ENCODE measurements at regions of chr5 and their contacts with region 1.

Region 1: GRCh38 chr5:6623228-6623627 is 9.6 kb downstream of the NSUN2 start:
- DNase-seq: no peak
- ATAC-seq: no peak
- H3K4me3 ChIP-seq: no peak overlapping the region
- H3K27ac ChIP-seq: no peak overlapping the region
- H3K4me1 ChIP-seq: no peaks in the 10 kb centered on the region
- H3K27me3 ChIP-seq: no peaks in the 10 kb centered on the region
- CTCF ChIP-seq: no peak

Region 2: GRCh38 chr5:6246820-6247437 is 376.3 kb before region 1 on chr5:
- CTCF ChIA-PET with region 1: no interaction called
- POLR2A ChIA-PET with region 1: no interaction called
- intact Hi-C with region 1: no loop called
- DNase-seq: peak; percentile 60
- ATAC-seq: no peak
- H3K4me3 ChIP-seq: no peak overlapping the region
- H3K27ac ChIP-seq: no peak overlapping the region
- H3K4me1 ChIP-seq: peaks cover 13% of the 10 kb centered on the region
- H3K27me3 ChIP-seq: no peaks in the 10 kb centered on the region
- CTCF ChIP-seq: no peak

Region 3: DNA sequence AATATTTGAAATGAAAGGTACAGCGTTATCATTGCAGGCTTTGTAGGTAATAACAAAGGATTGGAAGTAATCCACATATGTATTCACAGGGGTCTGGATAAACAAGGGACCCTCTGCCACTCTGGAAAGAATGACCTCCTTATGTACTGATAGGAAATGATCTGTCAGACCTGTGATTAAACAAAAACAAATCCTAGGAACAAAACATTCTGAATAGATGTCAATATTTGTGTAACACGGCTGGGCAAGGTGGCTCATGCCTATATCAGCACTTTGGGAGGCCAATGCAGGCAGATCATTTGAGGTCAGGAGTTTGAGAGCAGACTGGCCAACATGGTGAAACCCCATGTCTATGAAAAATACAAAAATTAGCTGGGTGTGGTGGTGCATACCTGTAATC is 32.6 kb before region 1 on chr5:
- CTCF ChIA-PET with region 1: no interaction called
- POLR2A ChIA-PET with region 1: interaction called, 21 read pairs
- intact Hi-C with region 1: no loop called
- DNase-seq: no peak
- ATAC-seq: no peak
- H3K4me3 ChIP-seq: no peak overlapping the region
- H3K27ac ChIP-seq: no peak overlapping the region
- H3K4me1 ChIP-seq: no peaks in the 10 kb centered on the region
- H3K27me3 ChIP-seq: peaks cover 13% of the 10 kb centered on the region; the same call in 1 of the 2 replicates
- CTCF ChIP-seq: no peak